ENCODE measurements at regions of chr2 and their contacts with region 1.

Region 1: GRCh38 chr2:161954103-161954502 is 119.9 kb downstream of the DPP4 start:
- DNase-seq: no peak
- H3K4me3 Mint-ChIP-seq: peak overlapping the region; percentile 19
- H3K27ac Mint-ChIP-seq: peak overlapping the region; percentile 93
- H3K4me1 Mint-ChIP-seq: peaks cover 80% of the 10 kb centered on the region
- H3K27me3 Mint-ChIP-seq: no peaks in the 10 kb centered on the region

Region 2: DNA sequence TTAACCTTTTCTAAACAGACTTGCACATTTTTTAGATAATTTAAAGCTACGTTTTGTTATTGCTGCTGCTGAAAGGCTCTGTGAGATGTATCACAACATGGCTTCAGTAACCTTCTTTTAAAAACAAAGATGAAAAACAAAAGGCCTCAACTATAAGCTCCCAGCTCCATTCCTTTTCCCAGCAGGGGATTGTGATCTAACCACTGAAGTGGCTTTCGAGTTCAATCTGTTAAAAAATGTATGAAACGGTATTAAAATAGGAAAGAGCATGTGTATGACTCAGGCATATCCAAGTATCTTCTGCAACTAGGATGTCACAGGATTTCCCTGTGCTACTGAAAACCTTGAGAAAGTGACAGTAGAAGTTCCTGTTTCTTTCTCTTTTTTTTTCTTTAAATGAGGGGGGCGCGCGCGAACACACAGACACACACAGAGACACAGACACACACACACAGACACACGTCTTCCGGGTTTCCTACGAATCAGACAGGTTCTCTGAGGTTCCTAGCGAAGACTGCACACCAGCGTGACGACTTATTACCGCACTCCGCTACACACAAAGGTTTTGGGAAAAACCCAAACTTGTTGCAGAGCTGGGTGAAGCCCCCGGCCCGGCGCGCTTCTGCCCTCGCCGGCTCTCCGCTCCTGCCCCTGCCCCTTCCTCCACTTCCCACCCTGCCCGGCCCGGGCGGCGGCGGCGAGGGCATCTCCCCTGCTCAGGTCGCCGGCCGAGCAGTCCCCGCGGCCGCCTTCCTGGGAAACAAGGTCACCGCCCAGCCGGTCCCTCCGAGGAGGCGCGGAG is 1547.3 kb before region 1 on chr2:
- intact Hi-C with region 1: loop called (anchors 10 kb)
- DNase-seq: peak; percentile 66
- H3K4me3 Mint-ChIP-seq: peak overlapping the region; percentile 90
- H3K27ac Mint-ChIP-seq: peak overlapping the region; percentile 92
- H3K4me1 Mint-ChIP-seq: peaks cover 83% of the 10 kb centered on the region
- H3K27me3 Mint-ChIP-seq: no peaks in the 10 kb centered on the region

Region 3: DNA sequence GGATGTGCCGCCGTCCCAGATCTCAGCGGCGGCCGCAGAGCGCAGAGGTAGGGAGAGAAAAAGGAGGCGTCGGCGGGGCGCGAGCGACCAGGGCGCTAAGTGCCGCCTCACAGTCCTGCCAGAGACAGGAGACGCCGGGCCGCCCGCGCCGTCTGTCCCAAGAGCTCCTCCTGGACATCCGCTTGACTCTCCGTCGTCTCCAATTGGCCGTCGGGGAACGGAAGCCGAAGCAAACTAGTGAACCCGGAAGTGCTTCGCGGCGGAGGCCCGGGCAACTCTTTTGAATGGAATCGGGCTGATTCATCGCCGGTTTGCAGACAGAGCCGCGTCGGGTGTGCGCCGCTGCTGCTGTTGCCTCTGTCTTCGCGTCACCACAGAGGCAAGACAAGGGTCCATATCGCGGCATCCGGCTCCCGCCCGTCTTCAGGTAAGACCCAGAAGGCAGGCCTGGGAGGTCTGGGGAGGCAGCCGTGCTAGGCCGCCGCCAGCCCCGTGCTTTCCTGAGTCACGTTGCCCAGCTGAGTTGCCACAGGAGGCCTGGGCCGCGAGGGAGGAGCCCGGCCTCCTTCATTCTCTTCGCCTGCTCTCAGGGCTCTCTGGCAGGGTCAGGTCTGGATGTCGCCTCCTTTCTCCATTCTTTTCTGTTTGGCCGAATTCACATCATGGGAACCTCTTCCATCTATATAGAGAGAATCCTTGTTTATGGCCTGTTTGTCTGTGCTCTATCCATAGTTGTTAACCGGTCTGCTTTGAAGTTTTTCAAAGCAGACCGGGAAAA is 645.7 kb before region 1 on chr2 and contains the start of gene PSMD14:
- intact Hi-C with region 1: loop called (anchors 1 kb)
- DNase-seq: peak; percentile 90
- H3K4me3 Mint-ChIP-seq: peak within 1 kb of the TSS; percentile 91
- H3K27ac Mint-ChIP-seq: peak within 1 kb of the TSS; percentile 94
- H3K4me1 Mint-ChIP-seq: peaks cover 33% of the 10 kb centered on the region
- H3K27me3 Mint-ChIP-seq: peaks cover 5% of the 10 kb centered on the region
- total RNA-seq, gene PSMD14: 103 and 113 TPM in 2 replicates

Region 4: GRCh38 chr2:161780881-161781280 is 173.2 kb before region 1 on chr2:
- intact Hi-C with region 1: no loop called
- DNase-seq: no peak
- H3K4me3 Mint-ChIP-seq: no peak overlapping the region
- H3K27ac Mint-ChIP-seq: no peak overlapping the region
- H3K4me1 Mint-ChIP-seq: no peaks in the 10 kb centered on the region
- H3K27me3 Mint-ChIP-seq: peaks cover 12% of the 10 kb centered on the region

Region 5: GRCh38 chr2:161938339-161938738 is 15.8 kb before region 1 on chr2:
- intact Hi-C with region 1: no loop called
- DNase-seq: no peak
- H3K4me3 Mint-ChIP-seq: no peak overlapping the region
- H3K27ac Mint-ChIP-seq: no peak overlapping the region
- H3K4me1 Mint-ChIP-seq: peaks cover 2% of the 10 kb centered on the region
- H3K27me3 Mint-ChIP-seq: peaks cover 26% of the 10 kb centered on the region

Region 6: GRCh38 chr2:161981679-161982250 is 27.7 kb after region 1 on chr2:
- intact Hi-C with region 1: loop called (anchors 1 kb)
- DNase-seq: no peak
- H3K4me3 Mint-ChIP-seq: no peak overlapping the region
- H3K27ac Mint-ChIP-seq: peak overlapping the region; percentile 89
- H3K4me1 Mint-ChIP-seq: peaks cover 61% of the 10 kb centered on the region
- H3K27me3 Mint-ChIP-seq: no peaks in the 10 kb centered on the region

Region 7: DNA sequence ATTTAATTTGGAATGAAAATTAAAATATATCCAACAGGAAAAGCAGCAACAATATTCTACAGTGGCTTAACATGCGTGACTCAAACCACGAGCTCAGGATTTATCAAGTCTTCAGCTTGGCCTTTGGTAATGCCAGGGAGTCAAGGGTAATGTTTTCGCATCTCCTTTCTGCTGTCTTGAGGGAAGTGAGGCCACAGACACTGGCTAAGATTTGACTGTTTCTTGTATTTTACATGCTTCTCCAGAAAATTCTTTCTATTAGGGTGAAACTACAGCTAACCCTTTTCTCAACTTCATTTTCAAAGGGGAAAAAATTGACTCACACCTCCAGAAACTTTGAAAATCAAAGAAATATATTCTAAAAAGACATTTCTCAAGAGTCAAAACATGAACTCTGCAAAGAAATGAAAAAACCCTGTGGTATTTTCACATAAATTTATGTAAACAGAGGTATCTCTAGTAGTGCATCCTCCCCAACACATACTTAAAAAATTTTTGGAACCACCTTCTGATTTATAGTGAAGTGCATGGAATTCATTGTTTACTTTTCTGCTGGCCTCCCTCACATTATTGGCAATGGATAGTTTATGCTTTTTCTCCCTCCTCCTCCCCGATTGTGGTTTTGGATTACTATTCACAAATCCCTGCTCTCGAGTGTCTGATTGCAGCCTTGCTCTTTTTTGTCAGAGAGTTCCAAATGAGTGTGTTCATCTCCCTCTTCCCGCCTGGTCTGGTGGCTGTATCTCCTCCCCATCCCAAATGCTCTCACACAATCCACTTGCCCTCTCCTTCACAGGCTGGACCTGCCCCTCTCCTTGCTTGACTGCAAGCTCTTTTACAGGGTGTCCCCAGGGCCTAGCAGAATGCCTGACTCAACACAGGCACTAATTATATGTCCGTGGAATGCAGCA is 71.3 kb after region 1 on chr2:
- intact Hi-C with region 1: loop called (anchors 1 kb)
- DNase-seq: no peak
- H3K4me3 Mint-ChIP-seq: peak overlapping the region; percentile 52
- H3K27ac Mint-ChIP-seq: peak overlapping the region; percentile 70
- H3K4me1 Mint-ChIP-seq: peaks cover 74% of the 10 kb centered on the region
- H3K27me3 Mint-ChIP-seq: no peaks in the 10 kb centered on the region

Region 8: DNA sequence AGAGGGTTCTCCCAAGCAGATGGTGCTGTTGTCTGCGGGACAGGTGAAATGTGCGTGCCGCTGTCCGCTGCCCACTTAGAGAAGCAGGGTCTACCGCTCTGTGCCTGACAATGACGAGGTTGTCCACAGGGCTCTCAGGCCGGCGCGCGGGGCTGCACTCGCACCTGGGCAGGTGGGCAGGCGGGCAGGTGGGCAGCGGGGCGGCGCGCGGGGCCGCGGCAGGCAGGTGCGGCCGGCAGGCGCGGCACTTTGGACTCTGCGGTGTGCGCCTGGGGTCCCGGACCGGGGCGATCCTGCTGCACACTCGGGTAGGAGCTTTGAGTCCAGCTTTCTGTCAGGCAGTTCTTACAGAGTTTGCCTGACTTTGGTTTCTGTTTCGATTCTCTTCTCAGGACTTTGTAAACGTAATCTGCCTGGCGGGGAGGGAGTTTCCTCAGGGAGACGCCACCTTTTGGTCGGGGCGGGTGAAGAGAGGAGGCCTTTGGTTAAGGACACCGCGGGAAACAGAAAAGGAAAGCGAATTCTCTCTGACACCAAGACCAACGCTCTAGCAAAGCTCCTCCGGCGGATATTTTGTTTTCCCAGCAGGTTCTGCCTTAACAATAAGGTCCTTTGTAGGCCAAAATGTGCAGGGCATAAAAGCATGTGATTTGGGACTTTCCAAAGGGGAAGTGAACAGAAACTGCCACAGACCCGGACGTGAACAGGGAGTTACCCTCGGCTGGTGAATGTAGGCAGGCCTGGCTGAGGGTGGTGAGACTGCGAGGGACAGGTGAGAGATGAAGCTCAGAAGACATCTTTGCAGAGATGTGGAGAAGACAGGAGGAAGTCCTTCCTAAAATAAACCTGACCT is 364.5 kb after region 1 on chr2 and contains the start of gene IFIH1:
- intact Hi-C with region 1: loop called (anchors 1 kb)
- DNase-seq: peak; percentile 79
- H3K4me3 Mint-ChIP-seq: peak within 1 kb of the TSS; percentile 93
- H3K27ac Mint-ChIP-seq: peak within 1 kb of the TSS; percentile 100
- H3K4me1 Mint-ChIP-seq: peaks cover 65% of the 10 kb centered on the region
- H3K27me3 Mint-ChIP-seq: no peaks in the 10 kb centered on the region
- total RNA-seq, gene IFIH1: 27.9 TPM in 2 replicates

Measured in activated T-helper 1 cell treated with anti-CD3 and anti-CD28 coated beads, Interleukin-12 subunit alpha, Interleukin-12 subunit beta, Interleukin-2, Interleukin-4 antibody, amounts not matched to agents 30 ng/mL and 10 ng/mL and 1 ng/mL, durations not matched to agents 14 hours and 24 hours and 36 hours (primary cell).